GM10248 (cell line): ENCODE measurements at regions of chr19 and their contacts with region 1.

Region 1: DNA sequence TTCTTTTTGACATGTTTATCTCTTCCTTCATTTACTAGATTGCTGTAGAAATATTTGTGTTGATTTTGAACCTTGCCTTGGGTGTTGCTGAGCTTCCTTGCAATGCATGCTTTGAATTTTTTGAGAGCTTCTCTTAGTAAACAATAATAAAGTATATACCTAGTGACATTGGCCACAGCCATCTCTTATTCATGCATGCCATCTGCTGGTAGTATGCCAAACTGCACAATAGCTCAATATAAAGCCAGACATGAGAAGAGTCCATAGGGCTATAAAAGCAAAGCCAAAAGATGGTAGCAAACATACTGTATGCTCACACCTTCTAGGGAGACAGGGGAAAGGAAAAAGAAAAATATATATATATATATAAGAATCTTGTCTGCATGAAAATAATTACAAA is 18.9 kb upstream of the ZSCAN5A start:
- DNase-seq: peak; percentile 50
- CTCF ChIP-seq: peak; percentile 81

Region 2: DNA sequence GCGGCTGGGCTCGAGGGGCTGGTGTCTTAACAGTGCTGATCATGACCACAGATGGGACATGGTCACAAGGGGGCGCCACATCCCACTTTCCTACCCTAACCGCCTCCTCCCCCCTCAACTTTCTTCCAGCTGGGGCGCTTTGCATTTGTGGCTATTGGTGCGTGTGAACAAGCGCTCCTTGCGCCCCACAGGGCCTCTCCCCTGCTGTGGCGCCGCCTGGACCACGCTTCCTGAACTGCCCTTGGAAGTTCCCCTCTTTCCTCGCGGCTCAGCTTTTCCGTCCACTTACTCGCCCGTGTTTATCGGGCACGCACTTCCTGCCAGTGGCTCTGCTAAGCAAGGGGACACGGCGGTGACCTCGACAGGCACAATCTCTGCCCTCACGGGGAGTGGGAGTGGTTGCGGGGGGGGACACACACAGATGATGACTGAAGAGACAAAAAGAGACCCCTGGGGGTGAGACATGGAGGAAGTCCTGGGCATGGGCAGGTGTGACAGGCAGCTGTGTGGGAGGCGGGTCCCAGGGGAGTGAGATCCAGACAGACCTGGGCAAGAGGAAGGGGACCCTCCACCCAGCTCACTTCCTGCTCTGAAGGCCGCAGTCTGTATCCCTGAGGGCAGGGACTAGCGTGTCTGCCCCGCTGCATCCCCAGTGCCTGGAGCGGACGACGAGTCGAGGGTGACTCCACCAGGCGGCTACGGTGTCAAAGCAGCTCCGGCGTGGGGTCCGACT is 252.7 kb before region 1 on chr19:
- CTCF ChIA-PET with region 1: interaction called, 46 read pairs
- POLR2A ChIA-PET with region 1: no interaction called
- DNase-seq: peak; percentile 91
- CTCF ChIP-seq: peak; percentile 67

Region 3: GRCh38 chr19:56199686-56200085 is 133.8 kb before region 1 on chr19:
- CTCF ChIA-PET with region 1: no interaction called
- POLR2A ChIA-PET with region 1: no interaction called
- DNase-seq: no peak
- CTCF ChIP-seq: no peak

Region 4: DNA sequence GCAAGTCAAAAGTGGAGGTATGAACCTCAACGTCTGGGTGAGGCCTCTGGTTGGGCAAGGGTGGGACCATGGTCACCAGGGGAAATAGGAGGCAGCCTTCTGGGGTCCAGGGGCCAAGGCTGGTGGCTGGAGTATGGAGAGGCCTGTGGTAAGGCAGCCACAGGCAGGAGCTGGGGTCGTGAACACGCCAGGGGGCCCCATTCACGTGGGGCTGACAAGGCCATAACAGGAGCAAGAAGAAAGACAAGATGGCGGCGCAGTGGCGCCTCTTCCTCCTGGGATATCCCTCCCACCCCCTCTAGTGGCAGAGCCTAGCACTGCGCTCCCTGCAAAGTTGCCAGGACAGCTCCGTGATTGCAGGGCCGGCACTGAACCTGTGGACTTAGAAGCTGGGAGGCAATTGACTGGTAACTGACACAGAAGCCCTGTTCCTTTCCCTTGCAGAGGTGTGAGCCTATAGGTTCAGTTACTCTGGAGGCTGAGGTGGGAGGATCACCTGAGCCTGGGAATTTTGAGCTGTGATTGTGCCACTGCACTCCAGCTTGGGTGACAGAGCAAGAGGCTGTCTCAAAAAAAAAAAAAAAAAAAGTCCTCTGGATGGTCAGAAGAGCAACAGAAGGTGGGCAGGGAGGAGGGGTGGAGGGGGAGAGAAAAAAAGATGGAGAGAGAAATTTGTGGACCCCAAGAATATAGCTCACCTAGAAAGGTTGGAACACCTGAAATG is 80.6 kb before region 1 on chr19:
- CTCF ChIA-PET with region 1: interaction called, 133 read pairs
- POLR2A ChIA-PET with region 1: no interaction called
- DNase-seq: peak; percentile 66
- CTCF ChIP-seq: peak; percentile 79

Region 5: DNA sequence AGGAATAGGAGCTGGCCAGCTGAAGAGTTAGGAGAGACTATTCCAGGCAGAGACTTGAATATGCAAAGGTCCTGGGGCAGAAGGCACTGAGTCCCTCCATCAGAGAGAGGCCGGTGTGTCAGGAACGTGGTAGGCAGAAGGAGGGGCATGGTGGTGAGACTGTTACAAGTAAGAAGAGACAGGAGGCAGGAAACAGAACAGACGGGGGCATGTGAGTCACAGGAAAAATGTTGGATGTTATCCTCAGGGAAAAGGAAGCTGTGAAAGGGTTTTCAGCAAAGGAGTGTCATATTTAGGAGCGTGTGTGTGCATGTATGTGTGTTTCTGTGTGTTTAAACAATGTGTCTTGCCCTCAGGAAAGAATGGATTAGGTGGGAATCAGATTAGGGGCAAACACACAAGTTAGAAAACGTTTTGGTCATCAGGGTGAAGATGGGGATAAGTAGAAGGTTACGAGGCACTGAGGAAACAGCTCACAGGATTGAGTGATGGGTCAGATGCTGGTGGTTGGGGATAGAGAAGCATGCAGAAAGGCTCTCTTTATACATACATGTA is 59.9 kb before region 1 on chr19:
- CTCF ChIA-PET with region 1: interaction called, 12 read pairs
- POLR2A ChIA-PET with region 1: no interaction called
- DNase-seq: no peak
- CTCF ChIP-seq: no peak

Region 6: GRCh38 chr19:56321989-56322440 is 11.5 kb before region 1 on chr19:
- CTCF ChIA-PET with region 1: interaction called, 20 read pairs
- POLR2A ChIA-PET with region 1: no interaction called
- DNase-seq: peak; percentile 24
- CTCF ChIP-seq: no peak